Heart left ventricle (tissue), 16 donors: ENCODE measurements at regions of chr3 and their contacts with region 1.

Region 1: DNA sequence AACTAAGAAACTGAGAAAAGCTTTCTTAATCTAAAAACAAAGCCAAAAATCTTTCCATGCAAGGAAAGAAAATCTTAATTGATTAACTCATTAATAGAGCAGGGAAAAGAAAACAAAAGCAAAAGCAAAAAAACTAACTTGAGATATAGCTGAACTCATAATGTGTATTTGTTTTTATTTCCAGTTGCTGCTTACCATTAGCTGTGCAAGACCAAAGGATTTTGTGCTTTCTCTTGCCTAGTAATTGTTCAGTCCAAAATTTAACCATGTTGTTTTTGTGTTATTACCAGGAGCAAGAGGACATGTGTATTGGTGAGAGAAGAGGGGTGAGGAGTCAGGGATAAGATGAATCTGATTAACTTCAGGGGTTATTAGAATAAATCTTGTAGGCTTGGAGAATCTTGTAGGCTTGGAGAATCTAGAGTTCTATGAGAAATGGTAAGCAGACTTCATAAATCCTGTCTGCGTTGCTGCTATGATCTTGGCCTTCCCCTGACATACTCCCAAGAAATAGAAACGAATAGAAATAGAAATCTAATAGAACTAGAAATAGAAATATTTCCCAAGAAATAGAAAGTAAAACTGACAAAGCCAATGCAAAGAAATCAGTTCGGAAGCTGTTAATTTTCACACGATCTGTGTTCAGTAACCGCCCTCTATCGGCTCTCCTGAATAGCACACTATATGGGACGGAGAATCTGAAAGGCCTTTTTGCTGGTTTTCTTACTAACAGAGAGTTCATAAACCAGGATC is 72.6 kb upstream of the TNFSF10 start:
- DNase-seq: peak in 1 of 5 donors; percentile 48
- ATAC-seq: peak; percentile 56 to 81 (median 76)
- H3K4me3 ChIP-seq: peak overlapping the region in 9 of 12 donors; percentile 29 to 50 (median 37)
- H3K27ac ChIP-seq: peak overlapping the region; percentile 35 to 91 (median 86)
- H3K4me1 ChIP-seq: peaks cover 0 to 59% (median 17%) of the 10 kb centered on the region in 12 donors
- H3K27me3 ChIP-seq: no peaks in the 10 kb centered on the region
- CTCF ChIP-seq: peak; percentile 48 to 88 (median 76)
- POLR2A ChIP-seq: no peak

Region 2: DNA sequence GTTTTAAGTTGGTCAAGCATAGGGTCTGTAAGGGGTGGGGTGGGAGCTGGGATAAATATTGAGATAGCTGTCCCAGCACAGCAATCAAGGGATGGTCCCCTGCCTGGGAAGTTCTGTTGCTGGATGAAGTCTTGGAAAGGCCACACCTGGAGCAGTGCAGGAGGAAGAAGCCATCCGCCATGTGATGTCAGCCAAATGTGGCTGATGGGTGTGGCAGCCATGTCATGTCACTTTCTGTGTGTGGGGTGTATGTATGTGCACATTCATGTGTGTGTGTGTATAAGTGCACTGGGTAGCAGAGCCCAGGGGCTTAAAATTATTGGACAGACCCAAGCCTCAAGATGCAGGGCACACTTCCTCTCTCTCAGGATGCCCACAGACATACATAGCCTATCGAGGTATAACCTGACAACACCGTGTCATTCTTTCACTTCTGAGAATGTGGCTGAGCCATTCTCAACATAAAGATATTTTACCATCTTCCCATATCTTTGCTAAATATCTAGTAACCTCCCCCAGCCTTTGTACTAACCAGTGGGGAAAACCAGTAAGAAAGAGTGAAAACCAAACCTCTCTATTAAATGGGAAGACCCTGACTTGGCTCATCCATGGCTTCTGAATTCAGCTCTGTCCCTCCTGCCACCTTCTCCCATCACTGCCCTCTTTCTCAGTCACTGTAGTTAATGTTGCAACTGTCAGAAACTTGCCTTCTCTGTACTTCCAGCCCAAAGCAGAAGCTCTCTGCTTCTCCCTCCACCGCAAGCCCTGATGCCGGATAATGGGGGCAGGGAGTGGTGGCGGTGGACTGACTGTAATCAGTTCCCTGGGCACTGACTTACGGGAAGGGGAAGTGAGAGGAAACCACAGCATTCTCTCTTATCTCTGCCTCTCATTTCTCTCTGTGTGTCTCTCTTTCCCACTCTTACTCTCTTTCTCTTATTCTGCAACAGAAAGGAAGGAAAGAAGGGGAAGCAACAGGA is 83.7 kb before region 1 on chr3:
- intact Hi-C with region 1: loop called in 7 of 10 experiments (anchors 2 to 10 kb)
- DNase-seq: peak; percentile 59 to 85 (median 69)
- ATAC-seq: peak; percentile 41 to 86 (median 59)
- H3K4me3 ChIP-seq: peak overlapping the region in 1 of 12 donors; percentile 23
- H3K27ac ChIP-seq: peak overlapping the region in 10 of 12 donors; percentile 4 to 96 (median 62)
- H3K4me1 ChIP-seq: peaks cover 6 to 71% (median 32%) of the 10 kb centered on the region in 12 donors
- H3K27me3 ChIP-seq: no peaks in the 10 kb centered on the region
- CTCF ChIP-seq: no peak
- POLR2A ChIP-seq: no peak

Region 3: DNA sequence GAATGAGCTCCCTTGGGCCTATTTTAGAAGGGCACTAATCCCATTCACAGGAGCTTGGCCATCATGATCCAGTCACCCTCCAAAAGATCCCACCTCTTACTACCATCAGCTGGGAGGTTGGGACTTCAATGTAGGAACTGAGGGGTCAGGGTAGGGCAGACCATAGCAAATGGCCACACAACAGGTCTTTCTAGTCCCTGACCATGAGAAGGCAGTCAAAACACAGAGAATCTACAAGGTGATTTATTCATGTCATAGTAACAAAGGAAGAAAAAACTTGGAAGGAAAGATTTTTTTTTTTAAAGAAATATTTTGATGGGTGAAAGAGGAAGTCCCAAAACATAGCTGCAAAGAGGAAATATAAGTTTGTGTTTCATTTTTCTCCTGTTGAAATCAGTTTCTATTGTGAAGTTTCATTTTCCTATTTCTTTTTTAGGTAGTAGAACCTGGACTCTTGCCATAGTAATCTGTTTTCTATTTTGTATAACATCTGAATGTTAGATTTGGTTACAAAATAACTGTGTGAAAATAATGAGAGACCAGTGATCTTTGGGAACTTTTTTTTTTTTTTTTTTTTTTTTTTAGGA is 49.1 kb before region 1 on chr3:
- intact Hi-C with region 1: loop called in 2 of 10 experiments (anchors 5 to 10 kb)
- DNase-seq: no peak
- ATAC-seq: no peak
- H3K4me3 ChIP-seq: no peak overlapping the region
- H3K27ac ChIP-seq: peak overlapping the region in 9 of 12 donors; percentile 20 to 68 (median 46)
- H3K4me1 ChIP-seq: peaks cover 0 to 50% (median 12%) of the 10 kb centered on the region in 12 donors
- H3K27me3 ChIP-seq: no peaks in the 10 kb centered on the region
- CTCF ChIP-seq: peak in 2 of 12 donors; percentile 3 to 26
- POLR2A ChIP-seq: no peak

Region 4: DNA sequence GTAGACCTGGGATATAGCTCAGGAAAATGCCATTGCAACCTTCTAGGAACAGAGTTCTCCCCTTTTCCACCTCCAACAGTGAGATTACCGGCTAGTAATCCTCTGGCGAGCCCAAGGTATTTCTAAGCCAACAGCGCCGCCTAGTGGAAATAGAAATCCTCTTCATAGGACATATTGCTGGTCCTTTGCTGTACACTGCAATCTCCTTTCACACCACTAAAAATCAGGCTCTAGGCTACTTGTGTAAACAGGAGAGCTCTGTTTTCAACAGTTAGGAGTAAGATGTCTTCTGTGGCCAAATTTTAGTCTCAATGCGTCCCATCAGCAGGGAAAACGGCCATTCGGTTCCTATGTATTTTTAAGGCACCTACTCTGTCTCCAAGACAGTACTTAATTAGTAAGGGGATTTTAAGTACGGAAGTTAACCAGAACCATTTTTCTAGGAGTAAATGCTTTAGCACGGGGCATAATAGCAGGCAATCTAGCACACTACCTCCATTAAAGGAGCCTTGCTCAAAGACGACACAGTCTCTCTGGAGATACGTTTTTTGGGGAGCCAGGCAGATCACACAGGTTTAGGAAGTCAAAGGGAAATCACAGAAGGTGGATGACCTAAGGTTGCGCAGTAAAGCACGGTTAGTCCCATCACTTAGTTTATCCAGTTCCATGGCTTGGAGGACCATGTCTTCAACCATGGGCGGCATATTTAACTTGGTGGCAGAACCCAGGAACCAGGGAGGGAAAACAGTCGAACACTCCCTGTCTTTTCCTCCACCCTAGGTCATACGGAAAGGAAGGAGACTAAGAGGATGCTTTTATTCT is 71.3 kb after region 1 on chr3:
- intact Hi-C with region 1: loop called in 2 of 10 experiments (anchors 5 to 10 kb)
- DNase-seq: peak in 4 of 5 donors; percentile 65 to 79 (median 73)
- ATAC-seq: peak; percentile 88 to 97 (median 96)
- H3K4me3 ChIP-seq: no peak overlapping the region
- H3K27ac ChIP-seq: no peak overlapping the region
- H3K4me1 ChIP-seq: peaks cover 0 to 28% (median 20%) of the 10 kb centered on the region in 12 donors
- H3K27me3 ChIP-seq: no peaks in the 10 kb centered on the region
- CTCF ChIP-seq: peak; percentile 73 to 89 (median 84)
- POLR2A ChIP-seq: no peak